IMR-90 (cell line): ENCODE measurements at regions of chr6 and their contacts with region 1.

Region 1: GRCh38 chr6:912871-913835 is 220.2 kb upstream of the EXOC2 start:
- DNase-seq: peak; percentile 47
- ATAC-seq: peak; percentile 88
- H3K4me3 ChIP-seq: no peak overlapping the region
- H3K27ac ChIP-seq: no peak overlapping the region
- H3K4me1 ChIP-seq: peaks cover 4% of the 10 kb centered on the region; the same call in 1 of the 2 replicates
- H3K27me3 ChIP-seq: peaks cover 12% of the 10 kb centered on the region
- CTCF ChIP-seq: peak; percentile 69
- POLR2A ChIP-seq: no peak
- RAD21 ChIP-seq: peak; percentile 78

Region 2: GRCh38 chr6:894274-894673 is 18.9 kb before region 1 on chr6:
- CTCF ChIA-PET with region 1: no interaction called
- POLR2A ChIA-PET with region 1: no interaction called
- dilution Hi-C with region 1: no loop called
- in situ Hi-C with region 1: no loop called
- intact Hi-C with region 1: no loop called
- DNase-seq: no peak
- ATAC-seq: no peak
- H3K4me3 ChIP-seq: no peak overlapping the region
- H3K27ac ChIP-seq: no peak overlapping the region
- H3K4me1 ChIP-seq: no peaks in the 10 kb centered on the region; the same call in 1 of the 2 replicates
- H3K27me3 ChIP-seq: peaks cover 14% of the 10 kb centered on the region
- CTCF ChIP-seq: no peak
- POLR2A ChIP-seq: no peak
- RAD21 ChIP-seq: no peak

Region 3: GRCh38 chr6:1381481-1382330 is 468.6 kb after region 1 on chr6:
- CTCF ChIA-PET with region 1: interaction called, 6 read pairs
- POLR2A ChIA-PET with region 1: no interaction called
- dilution Hi-C with region 1: no loop called
- in situ Hi-C with region 1: loop called (anchors 25 kb)
- intact Hi-C with region 1: loop called (anchors 1 kb)
- DNase-seq: no peak
- ATAC-seq: peak; percentile 94
- H3K4me3 ChIP-seq: peak overlapping the region; percentile 44
- H3K27ac ChIP-seq: no peak overlapping the region
- H3K4me1 ChIP-seq: peaks cover 8% of the 10 kb centered on the region; the same call in 1 of the 2 replicates
- H3K27me3 ChIP-seq: peaks cover 46% of the 10 kb centered on the region
- CTCF ChIP-seq: peak; percentile 76
- POLR2A ChIP-seq: 0 out of 2 replicates have a peak, but pooled peaks have one; percentile 24
- RAD21 ChIP-seq: peak; percentile 87

Region 4: GRCh38 chr6:1396952-1397868 is 484.1 kb after region 1 on chr6:
- CTCF ChIA-PET with region 1: interaction called, 4 read pairs
- POLR2A ChIA-PET with region 1: no interaction called
- dilution Hi-C with region 1: no loop called
- in situ Hi-C with region 1: loop called (anchors 25 kb)
- intact Hi-C with region 1: loop called (anchors 5 kb)
- DNase-seq: peak; percentile 98
- ATAC-seq: peak; percentile 55
- H3K4me3 ChIP-seq: no peak overlapping the region
- H3K27ac ChIP-seq: no peak overlapping the region
- H3K4me1 ChIP-seq: peaks cover 19% of the 10 kb centered on the region
- H3K27me3 ChIP-seq: no peaks in the 10 kb centered on the region; the same call in 1 of the 2 replicates
- CTCF ChIP-seq: peak; percentile 98
- POLR2A ChIP-seq: peak; percentile 46; the same call in 1 of the 2 replicates
- RAD21 ChIP-seq: peak; percentile 93

Region 5: GRCh38 chr6:1436334-1437306 is 523.5 kb after region 1 on chr6:
- CTCF ChIA-PET with region 1: no interaction called
- POLR2A ChIA-PET with region 1: no interaction called
- dilution Hi-C with region 1: no loop called
- in situ Hi-C with region 1: no loop called
- intact Hi-C with region 1: loop called (anchors 2 kb)
- DNase-seq: peak; percentile 72
- ATAC-seq: peak; percentile 99
- H3K4me3 ChIP-seq: no peak overlapping the region
- H3K27ac ChIP-seq: no peak overlapping the region
- H3K4me1 ChIP-seq: no peaks in the 10 kb centered on the region
- H3K27me3 ChIP-seq: peaks cover 20% of the 10 kb centered on the region
- CTCF ChIP-seq: peak; percentile 90
- POLR2A ChIP-seq: no peak
- RAD21 ChIP-seq: peak; percentile 84